Left lung (tissue), 14 donors: ENCODE measurements at regions of chr6 and their contacts with region 1.

Region 1: GRCh38 chr6:33771146-33772081 is 17.5 kb downstream of the LEMD2 start:
- DNase-seq: peak; percentile 71 to 94 (median 90)
- ATAC-seq: peak; percentile 91
- H3K4me3 ChIP-seq: no peak overlapping the region
- H3K27ac ChIP-seq: peak overlapping the region; percentile 45 to 63
- H3K4me1 ChIP-seq: peaks cover 6 to 38% of the 10 kb centered on the region in 2 donors
- H3K27me3 ChIP-seq: peaks cover 0 to 5% of the 10 kb centered on the region in 2 donors
- CTCF ChIP-seq: peak; percentile 92 to 97

Region 2: GRCh38 chr6:34027445-34027936 is 256.1 kb after region 1 on chr6:
- intact Hi-C with region 1: loop called in 1 of 2 experiments (anchors 10 kb)
- DNase-seq: peak in 2 of 4 donors; percentile 42 to 86
- ATAC-seq: peak; percentile 77
- H3K4me3 ChIP-seq: no peak overlapping the region
- H3K27ac ChIP-seq: no peak overlapping the region
- H3K4me1 ChIP-seq: no peaks in the 10 kb centered on the region
- H3K27me3 ChIP-seq: peaks cover 0 to 33% of the 10 kb centered on the region in 2 donors
- CTCF ChIP-seq: peak; percentile 65 to 82

Region 3: DNA sequence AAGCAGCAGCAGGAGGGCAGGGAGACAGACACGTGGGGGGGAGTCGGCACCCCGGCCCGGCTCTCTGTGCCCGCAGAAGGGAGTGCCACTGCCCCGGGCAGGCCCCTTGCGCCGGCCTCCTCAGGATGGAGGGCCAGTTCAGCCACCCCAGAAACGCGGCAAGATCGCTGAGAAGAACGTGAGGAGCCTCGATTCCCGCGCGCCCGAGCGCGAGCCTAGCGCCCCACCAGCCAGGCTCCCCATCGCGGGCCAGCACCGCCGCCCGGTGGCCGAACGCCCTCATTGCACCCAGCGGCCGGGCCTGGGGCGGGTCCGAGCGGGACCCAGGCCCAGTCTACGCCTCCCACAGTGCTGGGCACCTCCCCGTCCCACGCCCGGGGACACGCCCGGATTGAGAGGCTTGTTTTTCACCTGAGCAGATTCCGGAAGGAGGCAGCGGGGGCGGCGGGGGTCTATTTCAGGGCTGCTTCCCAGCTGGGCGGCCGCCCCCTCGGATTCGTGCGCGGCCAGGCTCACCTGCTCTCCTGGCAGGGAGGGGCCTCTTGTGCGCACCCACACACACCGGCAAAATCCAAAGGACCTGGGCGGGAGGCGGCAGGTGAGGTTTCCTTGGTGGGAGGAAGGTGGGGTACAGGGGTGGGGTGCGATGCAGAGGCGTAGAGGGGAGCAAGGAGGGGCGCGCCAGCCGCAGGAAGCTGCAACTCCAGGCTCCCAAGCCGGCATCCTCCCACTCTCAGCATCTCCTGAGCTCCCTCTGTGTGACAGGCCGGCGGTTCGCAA is 383.4 kb after region 1 on chr6:
- intact Hi-C with region 1: loop called in 1 of 2 experiments (anchors 5 kb)
- DNase-seq: peak; percentile 37 to 89 (median 64)
- ATAC-seq: peak; percentile 93
- H3K4me3 ChIP-seq: no peak overlapping the region
- H3K27ac ChIP-seq: no peak overlapping the region
- H3K4me1 ChIP-seq: peaks cover 2 to 5% of the 10 kb centered on the region in 2 donors
- H3K27me3 ChIP-seq: peaks cover 23 to 79% of the 10 kb centered on the region in 2 donors
- CTCF ChIP-seq: peak; percentile 87 to 98